Naive thymus-derived CD4-positive, alpha-beta T cell (primary cell): ENCODE measurements at regions of chr5 and their contacts with region 1.

Region 1: DNA sequence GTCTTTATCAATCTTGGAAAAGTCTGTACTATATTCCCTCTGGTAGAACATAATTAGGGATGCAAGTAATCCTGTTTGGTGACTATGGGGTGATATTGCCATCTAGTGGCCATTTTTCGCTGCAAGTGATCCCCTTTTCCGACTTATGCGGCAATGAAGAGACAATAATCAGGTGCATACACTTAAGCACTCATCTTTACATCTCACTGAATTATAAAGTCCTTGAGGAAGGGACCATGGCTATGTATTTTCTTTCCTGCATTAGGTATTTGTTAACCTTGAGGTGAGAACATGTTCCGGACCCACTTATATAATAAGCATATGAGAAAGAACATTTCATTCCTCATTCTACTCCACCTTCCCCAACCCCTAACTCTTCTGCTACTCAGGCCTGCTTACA is 19.6 kb upstream of the LIX1 start:
- DNase-seq: peak in 7 of 9 donors; percentile 23 to 64 (median 45)
- ATAC-seq: peak; percentile 62
- H3K4me3 ChIP-seq: no peak overlapping the region
- H3K4me3 Mint-ChIP-seq: no peak overlapping the region
- H3K27ac ChIP-seq: no peak overlapping the region
- H3K27ac Mint-ChIP-seq: no peak overlapping the region
- H3K4me1 ChIP-seq: no peaks in the 10 kb centered on the region
- H3K4me1 Mint-ChIP-seq: peaks cover 0 to 17% (median 11%) of the 10 kb centered on the region in 7 donors
- H3K27me3 ChIP-seq: no peaks in the 10 kb centered on the region
- H3K27me3 Mint-ChIP-seq: peaks cover 0 to 4% (median 0%) of the 10 kb centered on the region in 5 donors

Region 2: DNA sequence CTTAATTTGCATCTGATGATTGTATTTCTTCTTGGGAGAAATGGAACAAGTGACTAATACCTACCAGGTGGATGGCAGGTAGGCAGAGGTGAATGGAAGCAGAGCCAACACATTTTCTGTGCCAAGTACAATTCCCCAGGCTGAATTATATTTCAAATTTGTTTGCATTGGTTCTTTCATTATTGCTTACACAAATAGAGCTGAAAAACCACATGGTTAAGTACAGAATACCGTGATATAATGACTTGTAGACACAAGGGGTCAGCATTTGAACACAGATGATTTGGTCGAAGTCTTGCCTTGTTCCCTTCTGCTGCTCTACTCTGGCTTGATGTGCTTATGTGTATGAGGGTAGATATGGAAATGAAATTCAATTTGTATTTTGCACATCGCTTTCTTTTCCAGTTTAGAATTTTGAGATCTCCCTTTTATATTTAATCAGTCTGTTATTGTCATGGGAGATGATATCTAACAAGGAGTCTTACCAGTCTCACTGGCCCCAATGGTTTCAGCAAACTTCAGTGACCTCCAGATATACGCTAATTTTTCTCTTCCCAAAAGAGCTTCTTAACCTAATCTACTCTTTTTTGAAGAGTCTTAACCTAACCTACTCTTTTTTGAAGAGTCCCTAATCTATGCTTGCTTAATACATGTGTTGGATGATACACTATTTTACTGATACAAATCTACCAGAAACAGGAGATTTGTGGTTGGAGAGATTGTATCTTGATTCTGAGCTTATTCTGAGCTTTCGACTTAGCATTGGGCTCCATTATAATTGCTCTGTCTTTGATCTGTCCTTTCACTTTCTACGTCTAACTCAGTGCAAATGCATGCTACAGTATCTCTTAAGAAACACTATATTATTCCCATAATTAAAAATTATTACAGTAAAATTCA is 817.1 kb before region 1 on chr5:
- CTCF ChIA-PET with region 1: no interaction called
- POLR2A ChIA-PET with region 1: no interaction called
- intact Hi-C with region 1: loop called (anchors 1 to 5 kb)
- DNase-seq: peak in 7 of 9 donors; percentile 33 to 70 (median 59)
- ATAC-seq: peak; percentile 91
- H3K4me3 ChIP-seq: no peak overlapping the region
- H3K4me3 Mint-ChIP-seq: peak overlapping the region; percentile 1 to 72 (median 48)
- H3K27ac ChIP-seq: no peak overlapping the region
- H3K27ac Mint-ChIP-seq: peak overlapping the region in 6 of 9 donors; percentile 3 to 53 (median 10)
- H3K4me1 ChIP-seq: peaks cover 6 to 7% of the 10 kb centered on the region in 2 donors
- H3K4me1 Mint-ChIP-seq: peaks cover 5 to 21% (median 18%) of the 10 kb centered on the region in 7 donors
- H3K27me3 ChIP-seq: no peaks in the 10 kb centered on the region
- H3K27me3 Mint-ChIP-seq: peaks cover 0 to 38% (median 8%) of the 10 kb centered on the region in 5 donors

Region 3: DNA sequence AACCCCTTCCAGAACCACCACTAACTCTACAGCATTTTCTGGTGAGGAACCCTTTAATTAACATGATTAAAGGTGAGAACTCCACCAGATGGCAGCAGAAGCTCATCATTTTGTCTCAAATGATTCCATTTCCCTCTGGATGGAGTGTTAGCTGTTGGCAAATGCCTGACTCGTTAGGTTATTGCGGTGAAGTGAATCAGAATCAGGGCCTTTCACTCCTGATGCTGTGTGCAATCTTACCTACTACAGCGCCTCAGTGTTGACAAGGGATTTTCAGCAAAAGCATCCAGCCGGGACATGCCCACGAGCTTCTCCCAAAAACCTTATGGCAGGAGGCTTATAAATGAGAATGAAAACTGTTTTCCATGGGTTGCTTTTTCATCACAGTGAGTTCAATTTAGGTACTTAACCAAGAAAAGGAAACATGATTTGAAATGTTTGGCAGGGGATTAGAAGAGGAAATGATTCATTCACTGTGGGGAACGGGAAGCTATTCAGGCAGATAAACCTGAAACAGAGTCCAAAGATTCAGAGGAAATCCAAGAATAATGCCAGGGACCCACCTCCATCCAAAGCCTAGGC is 547.8 kb before region 1 on chr5:
- CTCF ChIA-PET with region 1: interaction called, 13 read pairs
- POLR2A ChIA-PET with region 1: no interaction called
- intact Hi-C with region 1: loop called (anchors 1 kb)
- DNase-seq: peak in 6 of 9 donors; percentile 30 to 51 (median 38)
- ATAC-seq: peak; percentile 72
- H3K4me3 ChIP-seq: no peak overlapping the region
- H3K4me3 Mint-ChIP-seq: no peak overlapping the region
- H3K27ac ChIP-seq: no peak overlapping the region
- H3K27ac Mint-ChIP-seq: no peak overlapping the region
- H3K4me1 ChIP-seq: peaks cover 0 to 5% of the 10 kb centered on the region in 2 donors
- H3K4me1 Mint-ChIP-seq: peaks cover 0 to 5% (median 0%) of the 10 kb centered on the region in 7 donors
- H3K27me3 ChIP-seq: no peaks in the 10 kb centered on the region
- H3K27me3 Mint-ChIP-seq: peaks cover 5 to 43% (median 8%) of the 10 kb centered on the region in 5 donors

Region 4: GRCh38 chr5:96823900-96824351 is 338.1 kb before region 1 on chr5:
- CTCF ChIA-PET with region 1: interaction called, 5 read pairs
- POLR2A ChIA-PET with region 1: no interaction called
- intact Hi-C with region 1: loop called in 1 of 2 experiments (anchors 1 kb)
- DNase-seq: no peak
- ATAC-seq: peak; percentile 48
- H3K4me3 ChIP-seq: no peak overlapping the region
- H3K4me3 Mint-ChIP-seq: no peak overlapping the region
- H3K27ac ChIP-seq: no peak overlapping the region
- H3K27ac Mint-ChIP-seq: peak overlapping the region in 1 of 9 donors; percentile 35
- H3K4me1 ChIP-seq: peaks cover 0 to 29% of the 10 kb centered on the region in 2 donors
- H3K4me1 Mint-ChIP-seq: peaks cover 15 to 49% (median 46%) of the 10 kb centered on the region in 7 donors
- H3K27me3 ChIP-seq: no peaks in the 10 kb centered on the region
- H3K27me3 Mint-ChIP-seq: peaks cover 0 to 21% (median 0%) of the 10 kb centered on the region in 5 donors

Region 5: GRCh38 chr5:96997265-96997859 is 164.7 kb before region 1 on chr5:
- CTCF ChIA-PET with region 1: interaction called, 12 read pairs
- POLR2A ChIA-PET with region 1: no interaction called
- intact Hi-C with region 1: loop called (anchors 1 kb)
- DNase-seq: peak in 5 of 9 donors; percentile 13 to 49 (median 21)
- ATAC-seq: peak; percentile 81
- H3K4me3 ChIP-seq: no peak overlapping the region
- H3K4me3 Mint-ChIP-seq: no peak overlapping the region
- H3K27ac ChIP-seq: no peak overlapping the region
- H3K27ac Mint-ChIP-seq: peak overlapping the region in 5 of 9 donors; percentile 13 to 75 (median 53)
- H3K4me1 ChIP-seq: no peaks in the 10 kb centered on the region
- H3K4me1 Mint-ChIP-seq: peaks cover 12 to 49% (median 33%) of the 10 kb centered on the region in 7 donors
- H3K27me3 ChIP-seq: no peaks in the 10 kb centered on the region
- H3K27me3 Mint-ChIP-seq: no peaks in the 10 kb centered on the region

Region 6: DNA sequence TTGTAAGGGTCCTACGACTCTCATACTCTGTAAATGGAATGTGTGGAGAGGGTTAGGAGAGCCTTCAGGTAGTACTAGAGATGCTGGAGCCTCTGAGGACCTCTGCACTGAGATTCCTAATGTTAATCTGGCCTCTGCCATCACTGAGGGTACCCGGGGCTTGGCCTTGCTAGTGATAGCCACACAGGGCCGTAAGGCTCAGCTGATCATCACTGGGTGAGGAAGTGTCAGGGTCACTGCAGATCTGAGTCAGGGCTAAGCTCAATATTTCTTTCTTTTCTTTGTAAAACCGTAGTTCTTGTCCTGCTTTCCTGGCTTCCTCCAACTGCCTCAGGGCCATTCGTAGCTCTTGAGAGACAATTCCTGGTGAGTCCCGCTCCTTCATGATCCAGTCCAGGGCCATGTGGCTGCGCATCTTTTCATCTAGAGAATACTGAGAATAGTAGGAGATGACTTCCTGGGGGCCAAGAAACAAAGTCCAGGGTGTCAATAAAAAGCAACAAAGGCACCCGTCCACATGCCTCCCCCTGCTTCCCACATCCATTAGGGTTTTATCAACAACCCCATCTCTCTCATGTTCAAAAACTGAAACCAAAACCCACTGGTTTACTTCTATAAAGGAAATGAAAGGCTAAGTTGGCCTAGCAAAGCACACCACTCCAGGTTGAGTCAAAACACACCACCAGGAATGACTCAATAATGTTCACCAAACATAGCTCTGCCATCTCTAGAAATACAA is 67.3 kb before region 1 on chr5:
- CTCF ChIA-PET with region 1: no interaction called
- POLR2A ChIA-PET with region 1: no interaction called
- intact Hi-C with region 1: loop called in 1 of 2 experiments (anchors 2 kb)
- DNase-seq: peak in 1 of 9 donors; percentile 28
- ATAC-seq: no peak
- H3K4me3 ChIP-seq: no peak overlapping the region
- H3K4me3 Mint-ChIP-seq: peak overlapping the region in 1 of 10 donors; percentile 62
- H3K27ac ChIP-seq: no peak overlapping the region
- H3K27ac Mint-ChIP-seq: peak overlapping the region in 1 of 9 donors; percentile 63
- H3K4me1 ChIP-seq: no peaks in the 10 kb centered on the region
- H3K4me1 Mint-ChIP-seq: peaks cover 0 to 20% (median 5%) of the 10 kb centered on the region in 7 donors
- H3K27me3 ChIP-seq: no peaks in the 10 kb centered on the region
- H3K27me3 Mint-ChIP-seq: peaks cover 0 to 43% (median 1%) of the 10 kb centered on the region in 5 donors

Region 7: GRCh38 chr5:97142521-97143254 is 19.4 kb before region 1 on chr5 and contains the start of gene LIX1:
- CTCF ChIA-PET with region 1: interaction called, 3 read pairs
- POLR2A ChIA-PET with region 1: no interaction called
- intact Hi-C with region 1: loop called in 1 of 2 experiments (anchors 1 kb)
- DNase-seq: peak in 6 of 9 donors; percentile 5 to 46 (median 35)
- ATAC-seq: peak; percentile 77
- H3K4me3 ChIP-seq: no peak within 1 kb of the TSS
- H3K4me3 Mint-ChIP-seq: no peak within 1 kb of the TSS
- H3K27ac ChIP-seq: no peak within 1 kb of the TSS
- H3K27ac Mint-ChIP-seq: no peak within 1 kb of the TSS
- H3K4me1 ChIP-seq: no peaks in the 10 kb centered on the region
- H3K4me1 Mint-ChIP-seq: peaks cover 0 to 6% (median 0%) of the 10 kb centered on the region in 7 donors
- H3K27me3 ChIP-seq: no peaks in the 10 kb centered on the region
- H3K27me3 Mint-ChIP-seq: peaks cover 6 to 37% (median 13%) of the 10 kb centered on the region in 5 donors
- total RNA-seq, gene LIX1: not detected

Region 8: GRCh38 chr5:97245386-97245785 is 83.3 kb after region 1 on chr5:
- CTCF ChIA-PET with region 1: no interaction called
- POLR2A ChIA-PET with region 1: no interaction called
- intact Hi-C with region 1: no loop called
- DNase-seq: no peak
- ATAC-seq: no peak
- H3K4me3 ChIP-seq: no peak overlapping the region
- H3K4me3 Mint-ChIP-seq: no peak overlapping the region
- H3K27ac ChIP-seq: no peak overlapping the region
- H3K27ac Mint-ChIP-seq: no peak overlapping the region
- H3K4me1 ChIP-seq: no peaks in the 10 kb centered on the region
- H3K4me1 Mint-ChIP-seq: no peaks in the 10 kb centered on the region
- H3K27me3 ChIP-seq: no peaks in the 10 kb centered on the region
- H3K27me3 Mint-ChIP-seq: peaks cover 0 to 24% (median 6%) of the 10 kb centered on the region in 5 donors